ENCODE measurements at regions of chr7 and their contacts with region 1.

Region 1: GRCh38 chr7:82044497-82045080 is 274.7 kb upstream of the HGF start:
- DNase-seq: no peak
- H3K4me3 ChIP-seq: no peak overlapping the region
- H3K27ac ChIP-seq: no peak overlapping the region
- H3K4me1 ChIP-seq: peaks cover 0 to 35% (median 12%) of the 10 kb centered on the region in 4 donors
- H3K27me3 ChIP-seq: no peaks in the 10 kb centered on the region
- CTCF ChIP-seq: peak; percentile 48 to 63 (median 60)
- EP300 ChIP-seq: no peak
- POLR2A ChIP-seq: no peak

Region 2: GRCh38 chr7:82234457-82235049 is 190.0 kb after region 1 on chr7:
- intact Hi-C with region 1: loop called (anchors 10 kb)
- DNase-seq: no peak
- H3K4me3 ChIP-seq: no peak overlapping the region
- H3K27ac ChIP-seq: peak overlapping the region in 2 of 4 donors; percentile 48 to 52
- H3K4me1 ChIP-seq: peaks cover 0 to 21% (median 11%) of the 10 kb centered on the region in 4 donors
- H3K27me3 ChIP-seq: no peaks in the 10 kb centered on the region
- CTCF ChIP-seq: peak; percentile 17 to 62 (median 43)
- EP300 ChIP-seq: no peak
- POLR2A ChIP-seq: no peak

Region 3: DNA sequence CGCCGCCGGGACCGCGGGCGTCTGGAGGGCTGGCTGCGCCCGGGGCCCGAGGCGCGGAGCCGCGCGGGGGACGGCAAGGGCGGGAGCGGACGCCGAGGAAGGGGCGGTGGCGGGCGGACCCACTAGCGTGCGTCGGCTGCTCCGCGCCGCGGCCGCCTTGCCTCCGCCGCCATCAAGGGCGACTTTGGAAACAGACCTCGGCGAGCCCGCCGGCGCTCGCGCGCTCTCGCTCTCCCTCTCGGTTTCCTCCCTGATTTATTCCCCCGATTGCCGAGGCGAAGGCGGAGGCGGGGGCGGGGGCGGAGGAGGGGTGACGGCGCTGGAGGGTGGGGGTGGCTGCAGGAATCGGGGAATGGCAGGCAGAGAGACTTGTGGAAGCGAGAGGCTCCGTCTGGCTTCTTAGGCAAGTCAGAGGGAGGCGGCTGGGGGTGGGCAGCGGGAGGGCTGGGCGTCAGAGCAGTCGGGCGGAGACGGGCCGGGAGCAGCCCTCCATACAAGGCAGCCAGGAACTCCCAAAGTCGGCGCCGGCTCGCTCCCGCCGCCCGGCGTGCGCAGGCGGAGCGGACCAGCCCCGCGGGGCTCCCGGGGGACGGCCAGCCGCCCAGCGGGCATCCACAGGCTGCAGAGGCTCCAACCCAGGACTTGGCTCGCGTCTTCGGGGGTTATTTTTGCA is 399.1 kb after region 1 on chr7 and contains the start of gene CACNA2D1:
- intact Hi-C with region 1: loop called (anchors 5 kb)
- DNase-seq: peak; percentile 96
- H3K4me3 ChIP-seq: peak within 1 kb of the TSS; percentile 72 to 94 (median 88)
- H3K27ac ChIP-seq: peak within 1 kb of the TSS; percentile 95 to 98 (median 96)
- H3K4me1 ChIP-seq: peaks cover 0 to 35% (median 14%) of the 10 kb centered on the region in 4 donors
- H3K27me3 ChIP-seq: no peaks in the 10 kb centered on the region
- CTCF ChIP-seq: peak in 1 of 4 experiments; percentile 44
- EP300 ChIP-seq: no peak
- POLR2A ChIP-seq: no peak
- total RNA-seq, gene CACNA2D1: 59.7 to 115 (median 87.4) TPM

Region 4: GRCh38 chr7:82481499-82482097 is 437.0 kb after region 1 on chr7:
- intact Hi-C with region 1: loop called (anchors 5 kb)
- DNase-seq: no peak
- H3K4me3 ChIP-seq: no peak overlapping the region
- H3K27ac ChIP-seq: no peak overlapping the region
- H3K4me1 ChIP-seq: peaks cover 0 to 9% (median 3%) of the 10 kb centered on the region in 4 donors
- H3K27me3 ChIP-seq: no peaks in the 10 kb centered on the region
- CTCF ChIP-seq: peak in 3 of 4 experiments; percentile 46 to 79 (median 71)
- EP300 ChIP-seq: no peak
- POLR2A ChIP-seq: no peak

Region 5: DNA sequence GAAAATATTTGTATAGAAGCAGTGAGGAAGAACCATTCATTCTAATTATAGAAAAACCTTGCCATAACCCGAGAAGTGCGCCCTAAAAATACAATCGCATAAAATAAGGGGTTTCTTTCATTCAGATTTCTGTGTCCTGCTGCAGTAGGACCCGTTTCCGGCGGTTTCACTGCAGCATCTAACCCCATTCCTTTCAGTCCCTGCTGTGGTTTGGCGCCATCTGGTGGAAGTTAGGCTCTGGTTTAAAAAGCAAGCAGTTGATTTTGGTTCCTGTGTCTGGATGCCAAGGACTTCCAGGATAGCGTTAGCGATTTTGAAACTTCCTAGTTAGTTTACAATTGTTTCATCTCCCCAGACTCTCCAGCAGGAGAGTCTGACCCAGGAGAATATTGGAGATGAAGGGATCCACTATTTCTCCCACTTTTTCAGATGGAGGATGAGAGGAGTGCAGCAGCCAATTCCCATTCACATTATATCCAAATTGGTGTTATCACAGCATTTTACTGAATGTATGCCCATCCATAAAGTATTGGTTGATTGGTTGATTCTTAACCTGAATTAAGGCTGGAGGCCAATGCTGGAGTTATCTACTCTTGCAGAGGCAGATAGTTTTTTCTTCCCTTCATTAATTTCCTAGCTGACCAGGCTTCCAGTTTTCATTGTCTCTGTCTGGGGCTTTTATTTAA is 527.7 kb after region 1 on chr7:
- intact Hi-C with region 1: loop called (anchors 1 kb)
- DNase-seq: peak; percentile 92
- H3K4me3 ChIP-seq: no peak overlapping the region
- H3K27ac ChIP-seq: no peak overlapping the region
- H3K4me1 ChIP-seq: peaks cover 0 to 3% (median 0%) of the 10 kb centered on the region in 4 donors
- H3K27me3 ChIP-seq: no peaks in the 10 kb centered on the region
- CTCF ChIP-seq: peak; percentile 57 to 93 (median 77)
- EP300 ChIP-seq: no peak
- POLR2A ChIP-seq: no peak

Region 6: DNA sequence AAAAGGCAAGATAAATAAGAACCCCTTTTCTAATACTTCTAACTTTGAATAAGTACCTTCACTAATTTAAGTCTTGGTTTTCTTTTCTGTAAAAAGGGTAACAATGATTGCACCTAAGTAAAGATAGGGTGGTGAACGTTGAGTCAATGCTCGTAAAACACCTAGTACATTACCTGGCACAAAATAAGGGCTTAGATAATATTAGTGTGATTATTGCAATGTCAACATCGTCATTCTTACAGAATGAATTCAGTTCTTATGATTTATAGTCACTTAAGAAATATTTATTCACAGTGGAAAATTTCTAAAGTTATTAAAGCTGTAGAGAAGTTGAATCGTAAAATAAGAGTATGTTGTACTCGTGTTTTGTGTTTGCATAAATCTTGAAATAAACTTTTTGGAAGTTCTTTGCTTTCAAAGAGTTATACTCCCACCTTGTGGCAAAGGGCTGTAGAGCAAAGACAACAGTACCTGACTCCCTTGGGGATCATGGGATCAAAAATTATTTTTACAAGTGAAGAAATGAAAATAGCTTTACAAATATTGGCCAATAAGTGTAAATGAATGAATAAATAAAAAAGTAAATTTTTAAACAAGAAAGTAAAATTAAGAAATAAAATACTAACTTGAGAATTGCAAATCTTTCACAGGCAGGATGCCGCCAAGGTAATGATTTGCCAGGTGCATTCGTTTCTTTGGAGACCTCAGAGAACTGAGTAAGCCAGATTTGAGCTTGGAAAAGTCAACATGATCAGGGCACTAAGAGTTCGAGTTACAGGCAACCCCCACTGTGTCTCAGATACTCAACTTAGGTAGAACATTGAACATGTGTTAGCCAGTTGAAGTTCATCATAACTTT is 684.8 kb after region 1 on chr7:
- intact Hi-C with region 1: loop called (anchors 2 kb)
- DNase-seq: no peak
- H3K4me3 ChIP-seq: no peak overlapping the region
- H3K27ac ChIP-seq: no peak overlapping the region
- H3K4me1 ChIP-seq: peaks cover 0 to 6% (median 2%) of the 10 kb centered on the region in 4 donors
- H3K27me3 ChIP-seq: no peaks in the 10 kb centered on the region
- CTCF ChIP-seq: peak; percentile 27 to 59 (median 35)
- EP300 ChIP-seq: no peak
- POLR2A ChIP-seq: no peak

Measured in sigmoid colon (tissue), 7 donors.